ENCODE measurements at regions of chr2 and their contacts with region 1.

Region 1: DNA sequence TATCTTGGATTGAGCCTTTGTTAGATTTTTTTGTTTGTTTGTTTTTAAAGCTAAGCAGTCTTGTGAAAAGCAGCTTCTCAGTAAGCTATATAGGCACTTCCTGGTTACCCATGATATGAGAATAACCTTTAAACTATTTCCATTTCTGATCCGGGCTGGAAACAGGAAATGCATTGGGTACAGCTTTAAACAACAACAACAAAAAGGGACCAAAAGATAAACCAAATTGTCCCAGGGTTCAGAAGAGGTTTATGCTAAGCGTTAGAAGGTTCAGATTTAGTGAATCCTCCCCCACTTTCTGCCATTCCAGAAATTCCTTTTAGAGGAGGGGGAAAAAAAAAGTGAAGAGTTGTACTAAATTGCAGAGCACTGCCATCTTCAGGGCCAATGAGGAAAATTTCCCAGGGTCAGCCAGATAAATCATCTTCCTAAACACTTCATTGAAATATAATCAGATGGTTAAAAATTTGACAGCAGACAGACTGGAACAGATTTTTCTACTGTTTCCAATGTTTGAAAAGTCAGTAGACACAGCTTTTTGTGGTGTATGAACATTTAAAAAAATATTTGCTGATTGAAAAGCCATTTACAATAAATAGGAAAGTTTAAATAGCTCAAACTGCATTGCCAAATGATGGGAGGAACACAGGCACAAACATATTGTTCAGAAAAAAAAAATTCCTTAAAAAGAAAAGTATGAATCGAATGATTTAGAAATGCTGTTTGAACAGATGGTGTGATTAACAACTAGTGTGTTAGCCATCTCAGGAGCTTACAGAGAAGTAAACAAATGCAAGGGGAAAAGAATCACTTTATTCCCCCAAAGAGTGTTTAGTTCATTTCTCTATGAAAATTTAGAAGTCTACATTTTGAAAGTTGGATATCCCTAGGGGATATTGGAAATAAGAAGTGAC is 189.9 kb upstream of the TANK start:
- DNase-seq: peak; percentile 37 to 92
- H3K4me3 ChIP-seq: peak overlapping the region; percentile 21; the same call in 1 of the 2 replicates
- H3K27ac ChIP-seq: peak overlapping the region; percentile 80
- H3K4me1 ChIP-seq: 0 out of 2 replicates have a peak, but pooled peaks cover 4% of the 10 kb centered on the region
- H3K27me3 ChIP-seq: no peaks in the 10 kb centered on the region
- CTCF ChIP-seq: peak; percentile 76

Region 2: GRCh38 chr2:160224060-160224459 is 746.2 kb before region 1 on chr2:
- CTCF ChIA-PET with region 1: no interaction called
- POLR2A ChIA-PET with region 1: no interaction called
- intact Hi-C with region 1: loop called (anchors 1 kb)
- DNase-seq: peak in 1 of 2 experiments; percentile 93
- H3K4me3 ChIP-seq: no peak overlapping the region
- H3K27ac ChIP-seq: peak overlapping the region; percentile 100
- H3K4me1 ChIP-seq: peaks cover 98% of the 10 kb centered on the region
- H3K27me3 ChIP-seq: no peaks in the 10 kb centered on the region
- CTCF ChIP-seq: no peak

Region 3: DNA sequence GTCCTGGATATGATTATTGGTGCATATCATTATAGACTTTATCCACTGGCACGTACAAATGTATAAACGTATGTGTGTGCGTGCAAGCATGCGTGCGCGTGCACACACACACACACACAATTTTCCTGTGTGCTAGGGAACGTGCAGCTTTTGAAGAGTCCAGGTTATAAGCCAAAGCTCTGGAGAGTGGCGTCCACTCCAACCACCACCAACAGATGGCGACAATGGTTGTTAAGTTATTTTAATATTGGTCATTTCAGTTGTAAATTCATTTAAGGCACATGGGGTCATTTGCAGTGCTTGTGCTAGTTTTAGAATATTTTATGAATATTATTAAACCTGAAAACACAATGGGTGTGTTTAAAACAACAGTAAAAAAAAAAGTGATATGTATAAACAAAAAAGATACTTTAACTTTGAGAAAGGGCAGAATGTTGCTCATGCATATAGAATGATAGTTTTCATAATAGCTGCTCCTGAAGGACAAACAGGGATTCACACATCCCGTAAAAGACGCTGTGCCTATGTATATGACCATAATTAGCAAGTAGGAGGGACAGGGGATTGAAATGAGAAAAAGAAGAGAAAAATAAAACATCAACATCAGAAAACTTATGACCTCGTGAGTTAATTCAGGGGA is 646.0 kb before region 1 on chr2:
- CTCF ChIA-PET with region 1: interaction called, 7 read pairs
- POLR2A ChIA-PET with region 1: no interaction called
- intact Hi-C with region 1: loop called (anchors 2 kb)
- DNase-seq: peak in 1 of 2 experiments; percentile 27
- H3K4me3 ChIP-seq: no peak overlapping the region
- H3K27ac ChIP-seq: no peak overlapping the region
- H3K4me1 ChIP-seq: no peaks in the 10 kb centered on the region
- H3K27me3 ChIP-seq: no peaks in the 10 kb centered on the region
- CTCF ChIP-seq: peak; percentile 70

Region 4: DNA sequence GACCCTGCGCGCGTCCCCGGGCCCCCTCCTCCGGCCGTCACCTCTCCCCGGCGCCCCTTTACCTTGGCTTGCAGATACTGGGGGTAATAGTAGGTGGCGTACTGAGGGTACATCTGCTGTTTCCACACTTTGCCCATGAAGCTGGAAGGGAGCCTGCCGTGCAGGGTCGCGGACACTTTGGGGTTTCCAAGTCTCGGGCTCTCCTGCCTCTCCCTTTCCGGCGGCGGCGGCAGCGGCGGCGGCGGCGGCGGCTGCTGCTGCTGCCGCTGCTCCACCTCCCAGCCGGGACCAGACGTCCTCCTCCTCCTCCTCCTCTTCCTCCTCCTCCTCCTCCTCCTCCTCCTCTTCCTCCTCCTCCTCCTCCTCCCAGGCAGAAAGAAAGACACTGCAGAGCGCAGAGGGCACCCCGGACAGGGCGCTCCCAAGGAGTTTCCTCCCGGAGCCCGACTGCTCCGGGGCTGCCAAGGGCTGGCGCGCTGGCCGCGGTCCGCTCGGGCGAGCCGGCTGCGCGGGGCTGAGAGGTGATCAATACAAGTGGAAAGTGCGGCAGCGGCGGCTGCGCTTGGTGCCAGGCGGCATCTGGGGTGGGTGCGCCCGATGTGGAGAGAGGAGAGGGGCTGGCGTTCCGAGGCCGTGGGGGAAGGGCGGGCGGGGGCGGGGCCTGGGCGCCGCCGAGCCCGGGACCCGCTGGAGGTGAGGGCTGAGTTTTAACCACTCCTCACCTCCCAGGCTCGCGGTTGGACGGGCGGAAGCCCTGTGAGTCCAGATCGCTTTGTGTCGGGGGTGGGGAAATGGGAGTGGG is 476.9 kb before region 1 on chr2 and contains the start of gene RBMS1:
- CTCF ChIA-PET with region 1: no interaction called
- POLR2A ChIA-PET with region 1: no interaction called
- intact Hi-C with region 1: loop called (anchors 1 kb)
- DNase-seq: peak in 1 of 2 experiments; percentile 57
- H3K4me3 ChIP-seq: peak within 1 kb of the TSS; percentile 85
- H3K27ac ChIP-seq: peak within 1 kb of the TSS; percentile 73
- H3K4me1 ChIP-seq: peaks cover 38% of the 10 kb centered on the region
- H3K27me3 ChIP-seq: no peaks in the 10 kb centered on the region
- CTCF ChIP-seq: no peak
- total RNA-seq, gene RBMS1: 50.7 and 65.1 TPM in 2 replicates

Region 5: GRCh38 chr2:160652236-160652635 is 318.1 kb before region 1 on chr2:
- CTCF ChIA-PET with region 1: interaction called, 5 read pairs
- POLR2A ChIA-PET with region 1: no interaction called
- intact Hi-C with region 1: loop called (anchors 1 kb)
- DNase-seq: no peak
- H3K4me3 ChIP-seq: no peak overlapping the region
- H3K27ac ChIP-seq: no peak overlapping the region
- H3K4me1 ChIP-seq: peaks cover 35% of the 10 kb centered on the region
- H3K27me3 ChIP-seq: no peaks in the 10 kb centered on the region
- CTCF ChIP-seq: no peak

Region 6: DNA sequence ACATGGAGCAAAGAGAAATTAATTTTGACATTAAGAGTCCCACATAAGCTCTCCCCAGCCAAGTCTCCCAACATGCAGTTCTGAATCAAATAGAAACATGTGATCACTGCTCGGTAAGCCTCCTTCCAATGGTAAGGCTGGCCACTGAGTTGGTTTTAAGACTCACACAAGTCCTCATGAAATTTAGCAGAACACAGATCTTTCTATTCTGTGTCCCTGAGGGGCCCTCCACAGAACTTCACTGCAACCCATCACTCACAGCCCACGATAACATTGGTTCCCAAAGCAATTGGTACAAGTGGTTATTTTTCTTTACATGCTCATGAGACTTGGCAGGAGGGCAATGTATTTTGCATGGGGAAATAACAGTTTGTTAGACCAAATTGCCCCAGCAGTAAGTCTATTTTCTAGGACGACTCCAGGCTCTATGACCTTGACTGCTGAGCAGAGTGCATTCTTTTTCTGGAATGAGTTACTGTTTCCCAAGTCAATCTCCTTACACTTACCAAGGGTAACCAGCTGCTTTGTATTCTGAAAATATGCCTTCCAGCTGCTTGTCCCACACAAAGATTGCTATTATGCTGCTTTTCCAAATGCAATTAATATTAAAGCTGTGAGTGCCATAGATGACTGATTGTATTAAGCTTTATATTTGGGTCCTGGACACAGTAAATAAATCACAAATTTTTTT is 47.6 kb after region 1 on chr2:
- CTCF ChIA-PET with region 1: no interaction called
- POLR2A ChIA-PET with region 1: no interaction called
- intact Hi-C with region 1: no loop called
- DNase-seq: no peak
- H3K4me3 ChIP-seq: no peak overlapping the region
- H3K27ac ChIP-seq: no peak overlapping the region
- H3K4me1 ChIP-seq: no peaks in the 10 kb centered on the region
- H3K27me3 ChIP-seq: no peaks in the 10 kb centered on the region
- CTCF ChIP-seq: no peak

Region 7: DNA sequence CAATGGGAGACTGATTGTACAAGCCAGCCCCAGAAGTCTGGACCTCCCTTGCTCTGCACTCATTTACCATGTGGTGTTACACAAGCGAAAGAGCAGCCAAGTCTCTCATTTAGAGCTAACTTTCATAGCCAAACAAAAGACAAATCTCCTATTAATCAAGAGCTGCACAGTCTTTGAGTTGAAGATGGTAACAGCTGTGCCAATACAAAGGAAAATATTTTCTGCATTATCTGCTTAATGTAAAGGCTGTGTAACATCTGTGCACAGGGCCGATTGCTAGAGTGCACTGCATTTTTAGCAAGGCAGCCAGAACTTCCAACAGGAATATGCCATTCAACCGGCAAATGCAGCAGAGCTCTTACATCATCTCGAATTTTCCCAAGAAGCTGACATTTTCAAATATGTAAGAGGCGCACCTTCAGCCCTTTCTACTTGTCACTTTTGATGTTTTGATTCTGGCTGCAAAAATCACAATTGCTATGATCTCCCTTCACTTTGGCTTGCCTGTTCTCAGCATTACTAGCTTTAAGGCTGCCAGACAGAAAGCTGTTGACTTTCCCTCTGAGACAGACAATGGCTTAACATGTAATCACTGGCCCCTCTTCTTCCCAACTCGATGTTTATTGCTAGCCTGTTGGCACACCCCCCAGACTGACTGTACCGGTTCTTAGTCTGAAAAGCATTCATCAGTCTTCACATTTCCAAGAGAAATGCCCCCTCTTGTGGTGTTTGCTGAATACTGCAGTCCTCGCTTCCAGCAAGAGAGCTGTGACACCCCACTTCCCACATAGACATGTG is 93.0 kb after region 1 on chr2:
- CTCF ChIA-PET with region 1: no interaction called
- POLR2A ChIA-PET with region 1: no interaction called
- intact Hi-C with region 1: loop called (anchors 10 kb)
- DNase-seq: peak; percentile 60 to 70
- H3K4me3 ChIP-seq: no peak overlapping the region
- H3K27ac ChIP-seq: no peak overlapping the region
- H3K4me1 ChIP-seq: peaks cover 11% of the 10 kb centered on the region; the same call in 1 of the 2 replicates
- H3K27me3 ChIP-seq: no peaks in the 10 kb centered on the region
- CTCF ChIP-seq: peak; percentile 90

Region 8: GRCh38 chr2:161265874-161266273 is 295.6 kb after region 1 on chr2:
- CTCF ChIA-PET with region 1: no interaction called
- POLR2A ChIA-PET with region 1: no interaction called
- intact Hi-C with region 1: no loop called
- DNase-seq: no peak
- H3K4me3 ChIP-seq: no peak overlapping the region
- H3K27ac ChIP-seq: no peak overlapping the region
- H3K4me1 ChIP-seq: no peaks in the 10 kb centered on the region
- H3K27me3 ChIP-seq: no peaks in the 10 kb centered on the region
- CTCF ChIP-seq: no peak

Measured in PC-9 (cell line).